ENCODE measurements at regions of chr3 and their contacts with region 1.

Region 1: DNA sequence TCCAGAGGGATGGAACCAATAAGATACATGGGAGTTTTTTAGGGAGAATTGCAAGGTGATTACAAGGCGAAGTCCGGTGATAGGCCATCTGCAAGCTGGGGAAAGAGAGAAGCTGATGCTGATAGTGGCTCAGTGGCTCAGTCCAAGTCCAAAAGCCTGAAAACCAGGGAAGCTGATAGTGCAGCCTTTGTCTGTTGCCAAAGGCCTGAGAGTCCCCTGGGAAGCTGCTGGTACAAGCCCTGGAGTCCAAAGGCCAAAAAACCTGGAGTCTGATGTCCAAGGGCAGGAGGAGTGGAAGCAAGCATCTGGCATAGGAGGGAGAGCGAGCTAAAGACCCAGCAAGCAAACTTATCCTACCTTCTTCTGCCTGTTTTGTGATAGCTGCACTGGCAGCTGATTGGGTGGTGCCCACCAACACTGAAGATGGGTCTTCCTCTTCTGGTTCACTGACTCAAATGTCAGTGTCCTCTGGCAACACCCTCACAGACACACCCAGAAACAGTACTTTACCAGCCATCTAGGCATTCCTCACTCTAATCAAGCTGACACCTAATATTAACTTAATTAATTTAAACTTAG is 16.7 kb downstream of the TFG start:
- DNase-seq: no peak
- ATAC-seq: no peak
- H3K4me3 Mint-ChIP-seq: no peak overlapping the region
- H3K27ac Mint-ChIP-seq: no peak overlapping the region
- H3K4me1 Mint-ChIP-seq: peaks cover 10% of the 10 kb centered on the region
- H3K27me3 Mint-ChIP-seq: no peaks in the 10 kb centered on the region
- CTCF ChIP-seq: no peak

Region 2: GRCh38 chr3:100360757-100361496 is 365.1 kb before region 1 on chr3:
- CTCF ChIA-PET with region 1: no interaction called
- POLR2A ChIA-PET with region 1: no interaction called
- intact Hi-C with region 1: no loop called
- DNase-seq: no peak
- ATAC-seq: no peak
- H3K4me3 Mint-ChIP-seq: no peak overlapping the region
- H3K27ac Mint-ChIP-seq: no peak overlapping the region
- H3K4me1 Mint-ChIP-seq: no peaks in the 10 kb centered on the region
- H3K27me3 Mint-ChIP-seq: no peaks in the 10 kb centered on the region
- CTCF ChIP-seq: no peak

Region 3: DNA sequence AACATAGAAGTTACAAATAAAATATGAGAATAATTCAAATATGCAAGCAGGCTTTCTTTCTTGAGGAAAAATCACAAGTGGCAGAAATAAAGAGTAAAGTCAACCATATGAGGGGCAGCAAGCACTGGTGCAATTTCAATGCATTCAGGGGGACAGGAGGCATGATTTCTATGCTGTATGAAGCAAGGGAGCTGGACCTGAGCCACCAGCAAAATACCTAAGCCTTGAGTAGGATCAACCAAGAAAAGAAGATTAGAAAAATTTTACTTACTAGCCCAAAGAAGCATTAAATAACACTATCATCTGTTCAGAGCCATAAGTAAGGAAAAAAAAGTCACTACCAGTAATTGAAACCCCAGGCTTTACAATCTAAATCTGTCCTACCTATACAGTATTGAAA is 110.3 kb before region 1 on chr3:
- CTCF ChIA-PET with region 1: interaction called, 5 read pairs
- POLR2A ChIA-PET with region 1: interaction called, 5 read pairs
- intact Hi-C with region 1: loop called (anchors 1 kb)
- DNase-seq: no peak
- ATAC-seq: no peak
- H3K4me3 Mint-ChIP-seq: no peak overlapping the region
- H3K27ac Mint-ChIP-seq: no peak overlapping the region
- H3K4me1 Mint-ChIP-seq: no peaks in the 10 kb centered on the region
- H3K27me3 Mint-ChIP-seq: peaks cover 9% of the 10 kb centered on the region
- CTCF ChIP-seq: no peak

Region 4: GRCh38 chr3:100882571-100882984 is 156.6 kb after region 1 on chr3:
- CTCF ChIA-PET with region 1: no interaction called
- POLR2A ChIA-PET with region 1: no interaction called
- intact Hi-C with region 1: no loop called
- DNase-seq: no peak
- ATAC-seq: no peak
- H3K4me3 Mint-ChIP-seq: no peak overlapping the region
- H3K27ac Mint-ChIP-seq: no peak overlapping the region
- H3K4me1 Mint-ChIP-seq: no peaks in the 10 kb centered on the region
- H3K27me3 Mint-ChIP-seq: no peaks in the 10 kb centered on the region
- CTCF ChIP-seq: no peak